CD14-positive monocyte (primary cell): ENCODE measurements at regions of chr6 and their contacts with region 1.

Region 1: GRCh38 chr6:72619883-72620696 is 1.8 kb upstream of the KCNQ5 start:
- DNase-seq: peak in 2 of 3 donors; percentile 5 to 17
- H3K4me3 ChIP-seq: peak overlapping the region; percentile 23 to 89 (median 29)
- H3K4me3 Mint-ChIP-seq: peak overlapping the region; percentile 90 to 98
- H3K27ac ChIP-seq: no peak overlapping the region
- H3K27ac Mint-ChIP-seq: peak overlapping the region in 2 of 7 donors; percentile 50 to 66
- H3K4me1 ChIP-seq: peaks cover 40 to 44% of the 10 kb centered on the region in 2 donors
- H3K4me1 Mint-ChIP-seq: peaks cover 37% of the 10 kb centered on the region
- H3K27me3 ChIP-seq: peaks cover 5 to 21% of the 10 kb centered on the region in 2 donors
- H3K27me3 Mint-ChIP-seq: peaks cover 23 to 34% (median 23%) of the 10 kb centered on the region in 3 donors
- CTCF ChIP-seq: no peak

Region 2: DNA sequence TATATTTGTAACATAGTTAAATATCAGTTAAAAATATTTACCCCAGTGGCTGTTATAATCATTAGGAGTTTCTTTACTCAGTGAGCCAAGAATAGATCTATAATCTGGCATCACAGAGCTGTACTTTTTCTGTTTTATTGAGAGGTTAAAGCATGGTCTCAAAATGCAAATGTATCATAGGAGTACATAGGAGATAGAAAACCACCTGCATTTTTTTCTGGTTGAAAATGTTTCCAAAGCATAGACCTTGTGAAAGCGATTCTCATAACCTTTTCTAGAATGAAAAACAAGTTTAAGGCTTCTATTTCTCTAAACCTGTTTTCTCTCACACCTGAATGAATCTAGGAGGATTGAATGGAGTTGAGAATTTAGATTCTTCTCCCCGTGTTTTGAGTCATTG is 16.1 kb after region 1 on chr6:
- intact Hi-C with region 1: no loop called
- DNase-seq: no peak
- H3K4me3 ChIP-seq: no peak overlapping the region
- H3K4me3 Mint-ChIP-seq: no peak overlapping the region
- H3K27ac ChIP-seq: no peak overlapping the region
- H3K27ac Mint-ChIP-seq: no peak overlapping the region
- H3K4me1 ChIP-seq: no peaks in the 10 kb centered on the region
- H3K4me1 Mint-ChIP-seq: no peaks in the 10 kb centered on the region
- H3K27me3 ChIP-seq: no peaks in the 10 kb centered on the region
- H3K27me3 Mint-ChIP-seq: no peaks in the 10 kb centered on the region
- CTCF ChIP-seq: no peak

Region 3: DNA sequence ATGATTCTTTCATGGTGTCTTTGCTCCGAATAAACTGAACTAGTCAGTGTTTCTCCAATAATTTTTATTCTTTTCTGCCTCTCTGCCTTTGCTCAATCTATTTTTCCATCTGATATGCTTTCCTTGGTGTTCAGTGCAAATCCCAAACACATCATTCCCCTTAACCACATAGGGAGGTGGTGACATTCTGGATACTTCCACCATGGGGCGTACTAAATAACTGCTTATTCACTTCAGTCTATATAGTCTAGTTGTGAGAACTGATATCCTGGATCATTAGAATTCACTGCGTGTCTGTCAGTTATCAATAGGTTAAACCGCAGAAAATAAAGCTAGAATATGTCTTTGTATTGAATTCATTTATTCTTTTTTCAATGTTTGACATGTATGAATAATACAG is 84.9 kb after region 1 on chr6:
- intact Hi-C with region 1: no loop called
- DNase-seq: no peak
- H3K4me3 ChIP-seq: no peak overlapping the region
- H3K4me3 Mint-ChIP-seq: no peak overlapping the region
- H3K27ac ChIP-seq: no peak overlapping the region
- H3K27ac Mint-ChIP-seq: no peak overlapping the region
- H3K4me1 ChIP-seq: no peaks in the 10 kb centered on the region
- H3K4me1 Mint-ChIP-seq: no peaks in the 10 kb centered on the region
- H3K27me3 ChIP-seq: no peaks in the 10 kb centered on the region
- H3K27me3 Mint-ChIP-seq: no peaks in the 10 kb centered on the region
- CTCF ChIP-seq: no peak

Region 4: DNA sequence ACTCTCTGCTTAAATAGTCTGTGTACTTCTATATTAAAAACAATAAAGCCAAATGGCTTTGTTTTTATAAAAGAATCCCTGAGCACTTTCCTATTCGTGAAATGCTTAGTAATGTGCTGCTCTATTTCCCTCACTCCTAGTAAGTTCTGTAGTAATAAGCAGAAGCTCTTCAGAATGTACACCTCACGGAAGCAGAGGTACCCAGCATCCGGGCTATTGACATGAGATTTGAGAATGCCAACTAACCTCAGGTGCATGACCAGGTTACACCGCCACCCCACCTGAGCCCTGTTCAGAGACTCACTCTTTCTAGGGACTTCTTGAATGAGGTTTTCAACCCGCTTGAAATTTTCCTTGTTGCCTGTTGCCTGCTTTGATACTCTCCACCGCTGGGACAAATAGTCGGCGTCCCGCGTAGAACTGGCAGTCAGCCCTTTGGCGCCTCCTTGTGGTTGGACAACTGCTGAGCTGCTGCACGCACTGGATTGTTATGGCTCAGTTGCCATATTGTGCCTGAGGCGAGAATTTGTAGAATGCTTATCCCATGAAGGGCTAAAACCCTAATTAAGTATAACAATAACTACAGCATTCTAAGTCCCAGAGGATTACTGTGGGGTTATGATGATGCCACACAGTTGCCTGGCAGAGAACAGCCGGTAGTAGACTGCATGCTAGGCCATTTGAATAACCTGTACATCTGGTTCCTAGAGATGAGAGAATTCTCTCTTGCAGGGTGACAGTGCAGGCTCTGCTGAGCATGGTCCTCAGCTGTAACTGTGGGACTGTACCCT is 509.8 kb after region 1 on chr6:
- intact Hi-C with region 1: loop called in 1 of 2 experiments (anchors 5 kb)
- DNase-seq: peak; percentile 41 to 64 (median 54)
- H3K4me3 ChIP-seq: peak overlapping the region in 1 of 3 experiments; percentile 39
- H3K4me3 Mint-ChIP-seq: peak overlapping the region; percentile 51 to 80
- H3K27ac ChIP-seq: no peak overlapping the region
- H3K27ac Mint-ChIP-seq: no peak overlapping the region
- H3K4me1 ChIP-seq: peaks cover 3 to 5% of the 10 kb centered on the region in 2 donors
- H3K4me1 Mint-ChIP-seq: peaks cover 4% of the 10 kb centered on the region
- H3K27me3 ChIP-seq: no peaks in the 10 kb centered on the region
- H3K27me3 Mint-ChIP-seq: no peaks in the 10 kb centered on the region
- CTCF ChIP-seq: peak; percentile 96